ENCODE measurements at regions of chr19 and their contacts with region 1.

Region 1: DNA sequence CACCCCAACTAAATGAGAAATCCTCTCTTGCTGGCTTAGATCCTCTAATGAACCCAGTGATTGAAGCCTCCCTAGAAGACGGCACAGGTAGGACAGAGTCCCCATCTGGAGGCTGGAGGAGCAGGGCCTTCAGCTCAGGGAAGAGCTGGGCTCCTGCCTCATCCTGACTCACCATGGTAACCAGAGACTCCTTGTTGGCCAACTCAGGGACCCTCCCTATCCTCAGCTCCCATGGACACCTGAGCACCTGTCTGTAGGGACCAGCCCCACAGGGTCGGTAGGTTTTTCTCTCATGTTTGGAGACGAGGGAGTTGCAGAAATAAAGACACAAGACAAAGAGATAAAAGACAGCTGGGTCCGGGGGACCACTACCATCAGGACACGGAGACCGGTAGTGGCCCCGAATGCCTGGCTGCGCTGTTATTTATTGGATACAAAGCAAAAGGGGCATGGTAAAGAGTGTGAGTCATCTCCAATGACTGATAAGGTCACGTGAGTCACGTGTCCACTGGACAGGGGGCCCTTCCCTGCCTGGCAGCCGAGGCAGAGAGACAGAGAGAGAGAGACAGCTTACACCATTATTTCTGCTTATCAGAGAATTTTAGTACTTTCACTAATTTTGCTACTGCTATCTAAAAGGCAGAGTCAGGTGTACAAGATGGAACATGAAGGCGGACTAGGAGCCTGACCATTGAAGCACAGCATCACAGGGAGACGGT is 26.6 kb downstream of the SIGLEC7 start:
- DNase-seq: no peak
- CTCF ChIP-seq: no peak

Region 2: GRCh38 chr19:51179256-51179655 is 10.5 kb after region 1 on chr19:
- CTCF ChIA-PET with region 1: interaction called, 11 read pairs
- POLR2A ChIA-PET with region 1: no interaction called
- DNase-seq: no peak
- CTCF ChIP-seq: no peak

Measured in GM10248 (cell line).